ENCODE measurements at regions of chr7 and their contacts with region 1.

Region 1: GRCh38 chr7:120554960-120555571 is 282.1 kb downstream of the KCND2 start:
- DNase-seq: no peak
- ATAC-seq: no peak

Region 2: GRCh38 chr7:119935418-119936025 is 619.5 kb before region 1 on chr7:
- intact Hi-C with region 1: loop called (anchors 10 kb)
- DNase-seq: no peak
- ATAC-seq: no peak